Mammary epithelial cell (primary cell): ENCODE measurements at regions of chr21 and their contacts with region 1.

Region 1: DNA sequence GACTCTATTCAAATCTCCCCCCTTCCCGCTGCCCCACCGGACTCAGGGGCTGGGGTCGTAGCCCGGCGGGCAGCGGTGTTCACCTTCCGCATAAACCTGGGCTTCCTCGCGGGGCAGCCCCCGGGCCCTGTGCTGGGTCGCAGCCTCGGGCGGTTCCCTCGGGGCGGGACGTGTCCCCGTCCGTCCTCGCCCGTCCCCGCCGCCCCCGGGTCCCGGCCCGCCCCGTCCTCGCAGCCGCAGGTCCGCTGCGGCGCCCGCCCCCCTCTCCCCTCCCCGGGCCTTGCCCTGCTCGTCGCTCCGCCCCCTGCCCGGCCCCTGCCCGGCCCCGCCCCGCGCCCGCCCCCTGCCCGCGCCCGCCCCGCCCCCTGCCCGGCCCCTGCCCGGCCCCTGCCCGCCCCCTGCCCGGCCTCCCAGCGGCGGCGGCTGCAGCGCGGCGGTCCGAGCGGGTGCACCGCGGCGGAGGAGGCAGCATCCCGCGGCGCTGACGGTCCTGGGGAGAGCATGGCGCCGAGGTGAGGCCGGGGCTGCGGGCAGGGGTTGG is at the start of gene COL18A1:
- DNase-seq: peak; percentile 37
- H3K4me3 ChIP-seq: peak within 1 kb of the TSS; percentile 31 to 62 (median 50)
- H3K27ac ChIP-seq: peak within 1 kb of the TSS; percentile 16
- H3K4me1 ChIP-seq: peaks cover 54% of the 10 kb centered on the region
- H3K27me3 ChIP-seq: no peaks in the 10 kb centered on the region
- CTCF ChIP-seq: no peak
- total RNA-seq, gene COL18A1: 45.6 to 79.7 TPM

Region 2: GRCh38 chr21:44939532-44940115 is 465.2 kb before region 1 on chr21 and contains the start of gene SLX9:
- CTCF ChIA-PET with region 1: no interaction called
- dilution Hi-C with region 1: no loop called
- in situ Hi-C with region 1: no loop called
- intact Hi-C with region 1: loop called (anchors 10 kb)
- DNase-seq: peak; percentile 81
- H3K4me3 ChIP-seq: peak within 1 kb of the TSS; percentile 80 to 95 (median 87)
- H3K27ac ChIP-seq: peak within 1 kb of the TSS; percentile 59
- H3K4me1 ChIP-seq: peaks cover 25% of the 10 kb centered on the region
- H3K27me3 ChIP-seq: no peaks in the 10 kb centered on the region
- CTCF ChIP-seq: no peak
- total RNA-seq, gene SLX9: 17.3 to 53.2 TPM

Region 3: GRCh38 chr21:45330075-45330781 is 74.6 kb before region 1 on chr21:
- CTCF ChIA-PET with region 1: no interaction called
- dilution Hi-C with region 1: no loop called
- in situ Hi-C with region 1: no loop called
- intact Hi-C with region 1: no loop called
- DNase-seq: peak; percentile 29
- H3K4me3 ChIP-seq: no peak overlapping the region
- H3K27ac ChIP-seq: no peak overlapping the region
- H3K4me1 ChIP-seq: peaks cover 33% of the 10 kb centered on the region
- H3K27me3 ChIP-seq: peaks cover 2% of the 10 kb centered on the region
- CTCF ChIP-seq: no peak

Region 4: GRCh38 chr21:45347712-45348499 is 56.9 kb before region 1 on chr21:
- CTCF ChIA-PET with region 1: no interaction called
- dilution Hi-C with region 1: no loop called
- in situ Hi-C with region 1: no loop called
- intact Hi-C with region 1: loop called (anchors 5 kb)
- DNase-seq: no peak
- H3K4me3 ChIP-seq: no peak overlapping the region
- H3K27ac ChIP-seq: no peak overlapping the region
- H3K4me1 ChIP-seq: peaks cover 5% of the 10 kb centered on the region
- H3K27me3 ChIP-seq: peaks cover 3% of the 10 kb centered on the region
- CTCF ChIP-seq: no peak

Region 5: DNA sequence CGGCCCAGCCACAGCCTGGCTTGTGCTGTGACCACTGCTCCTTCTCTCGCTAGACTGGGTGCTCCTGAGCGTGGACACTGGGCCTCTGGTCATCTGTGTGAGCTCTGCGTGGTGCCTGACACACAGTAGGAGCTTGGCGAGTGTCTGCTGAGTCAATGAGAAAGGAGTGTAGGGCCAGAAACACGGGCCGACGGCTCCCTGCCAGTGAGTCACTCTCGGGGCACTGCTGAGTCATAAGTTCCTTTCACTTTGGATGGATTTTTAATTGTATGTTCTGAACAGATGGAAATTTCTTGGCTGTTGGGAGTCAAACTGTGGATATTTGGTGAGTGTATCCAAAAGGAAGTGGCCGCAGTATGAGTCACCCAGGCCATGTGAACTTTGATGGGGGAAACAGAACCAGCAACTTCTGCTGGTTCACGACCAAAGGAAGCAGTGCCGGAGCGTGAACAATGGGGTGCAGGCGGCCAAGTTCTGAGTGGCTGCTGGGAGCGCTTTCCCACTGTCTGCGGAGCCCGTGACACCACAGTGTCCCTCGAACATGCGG is 40.8 kb before region 1 on chr21:
- CTCF ChIA-PET with region 1: no interaction called
- dilution Hi-C with region 1: no loop called
- in situ Hi-C with region 1: no loop called
- intact Hi-C with region 1: loop called (anchors 2 kb)
- DNase-seq: peak; percentile 96
- H3K4me3 ChIP-seq: no peak overlapping the region
- H3K27ac ChIP-seq: peak overlapping the region; percentile 80
- H3K4me1 ChIP-seq: peaks cover 20% of the 10 kb centered on the region
- H3K27me3 ChIP-seq: no peaks in the 10 kb centered on the region
- CTCF ChIP-seq: no peak

Region 6: DNA sequence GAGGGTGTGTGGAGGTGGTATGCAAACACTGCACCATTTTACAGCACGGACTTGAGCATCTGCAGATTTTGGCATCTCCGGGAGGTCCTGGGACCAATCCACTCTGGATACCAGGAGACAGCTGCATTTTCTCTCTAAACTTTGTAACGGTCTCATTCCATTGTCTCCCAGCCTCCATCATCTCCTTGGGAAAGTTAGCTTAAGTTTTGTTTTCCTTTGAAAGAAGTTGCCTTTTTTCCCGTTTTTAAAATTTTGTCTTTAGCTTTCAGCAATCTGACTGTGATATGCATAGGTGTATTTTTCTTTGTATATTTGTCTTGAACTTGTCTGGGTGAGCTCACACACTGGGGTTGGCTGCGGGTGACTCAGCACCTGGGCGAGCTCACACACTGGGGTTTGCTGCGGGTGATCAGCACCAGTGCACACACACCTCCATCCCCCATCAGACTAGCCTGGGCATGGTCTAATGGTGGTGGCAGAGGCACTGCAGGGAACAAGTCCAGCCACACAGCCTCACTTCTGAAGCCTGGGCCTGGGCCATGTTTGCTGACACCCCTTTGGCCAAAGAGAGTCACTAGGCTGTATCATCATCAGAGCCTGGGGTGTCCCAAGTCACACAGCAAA is 32.0 kb before region 1 on chr21:
- CTCF ChIA-PET with region 1: no interaction called
- dilution Hi-C with region 1: no loop called
- in situ Hi-C with region 1: no loop called
- intact Hi-C with region 1: loop called (anchors 1 kb)
- DNase-seq: peak; percentile 89
- H3K4me3 ChIP-seq: no peak overlapping the region
- H3K27ac ChIP-seq: peak overlapping the region; percentile 19
- H3K4me1 ChIP-seq: peaks cover 18% of the 10 kb centered on the region
- H3K27me3 ChIP-seq: no peaks in the 10 kb centered on the region
- CTCF ChIP-seq: no peak

Region 7: GRCh38 chr21:45439161-45439872 is 34.5 kb after region 1 on chr21:
- CTCF ChIA-PET with region 1: no interaction called
- dilution Hi-C with region 1: no loop called
- in situ Hi-C with region 1: no loop called
- intact Hi-C with region 1: loop called (anchors 2 kb)
- DNase-seq: peak; percentile 59
- H3K4me3 ChIP-seq: peak overlapping the region in 2 of 3 experiments; percentile 20 to 30
- H3K27ac ChIP-seq: no peak overlapping the region
- H3K4me1 ChIP-seq: peaks cover 7% of the 10 kb centered on the region
- H3K27me3 ChIP-seq: no peaks in the 10 kb centered on the region
- CTCF ChIP-seq: peak; percentile 79 to 96

Region 8: DNA sequence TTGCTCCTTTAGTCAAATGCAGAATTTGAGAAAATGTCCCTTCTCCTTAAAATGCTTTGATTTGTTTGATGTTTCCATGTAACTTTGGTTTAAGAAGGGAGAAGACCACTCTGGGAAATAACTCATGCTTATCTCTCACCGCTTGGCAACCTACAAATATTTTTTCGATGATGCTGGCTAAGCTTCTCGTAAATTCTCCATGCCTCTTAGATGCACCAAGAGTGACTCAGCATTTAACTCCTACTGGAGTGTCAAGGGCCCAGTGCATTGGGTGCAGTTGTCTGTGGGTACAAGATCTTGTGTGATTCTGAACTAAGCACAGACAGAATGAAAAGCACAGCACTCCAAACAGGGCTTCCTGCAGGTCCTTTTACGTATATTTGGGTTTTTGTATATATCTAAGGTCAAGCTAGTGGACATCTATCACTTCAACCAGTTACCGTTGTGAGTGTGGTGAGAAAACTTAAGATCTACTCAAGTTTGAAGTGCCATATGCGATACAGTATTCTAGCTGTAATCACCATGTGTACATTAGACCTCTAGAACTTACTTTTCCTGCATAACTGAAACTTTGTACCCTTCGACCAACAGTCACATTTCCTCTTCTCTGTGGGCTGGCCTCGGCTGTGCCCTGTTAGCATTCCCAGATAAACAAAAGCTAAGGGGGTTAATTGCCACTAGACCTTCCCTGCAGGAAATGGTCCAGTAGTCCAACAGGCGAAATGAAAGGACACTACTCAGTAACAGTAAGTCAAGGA is 56.0 kb after region 1 on chr21:
- CTCF ChIA-PET with region 1: no interaction called
- dilution Hi-C with region 1: loop called (anchors 5 kb)
- in situ Hi-C with region 1: no loop called
- intact Hi-C with region 1: no loop called
- DNase-seq: peak; percentile 31
- H3K4me3 ChIP-seq: no peak overlapping the region
- H3K27ac ChIP-seq: no peak overlapping the region
- H3K4me1 ChIP-seq: peaks cover 2% of the 10 kb centered on the region
- H3K27me3 ChIP-seq: no peaks in the 10 kb centered on the region
- CTCF ChIP-seq: no peak